Cardiac septum (tissue), 1 donor: ENCODE measurements at regions of chr1 and their contacts with region 1.

Region 1: DNA sequence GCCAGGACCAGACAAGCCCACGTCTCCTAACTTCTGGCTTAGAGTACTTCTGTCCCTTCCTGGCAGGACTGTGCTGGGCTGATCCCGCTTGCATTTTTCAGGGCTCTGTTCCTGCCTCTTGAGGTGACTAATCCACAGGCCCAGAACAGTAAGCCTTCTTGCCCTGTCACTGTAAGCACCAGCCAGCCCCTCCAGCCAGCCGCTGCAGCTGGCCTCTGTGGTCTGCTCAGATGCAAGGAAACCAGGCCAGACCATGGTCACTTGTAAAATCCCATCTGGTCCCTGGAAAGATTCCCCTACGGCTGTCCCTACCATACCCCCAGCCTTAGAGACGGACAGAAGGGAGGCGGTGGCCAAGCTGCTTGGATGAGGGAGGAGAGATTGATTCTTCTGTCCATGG is 74.2 kb downstream of the KIRREL1 start:
- DNase-seq: no peak

Region 2: GRCh38 chr1:157715736-157716135 is 351.9 kb before region 1 on chr1:
- intact Hi-C with region 1: no loop called
- DNase-seq: no peak

Region 3: DNA sequence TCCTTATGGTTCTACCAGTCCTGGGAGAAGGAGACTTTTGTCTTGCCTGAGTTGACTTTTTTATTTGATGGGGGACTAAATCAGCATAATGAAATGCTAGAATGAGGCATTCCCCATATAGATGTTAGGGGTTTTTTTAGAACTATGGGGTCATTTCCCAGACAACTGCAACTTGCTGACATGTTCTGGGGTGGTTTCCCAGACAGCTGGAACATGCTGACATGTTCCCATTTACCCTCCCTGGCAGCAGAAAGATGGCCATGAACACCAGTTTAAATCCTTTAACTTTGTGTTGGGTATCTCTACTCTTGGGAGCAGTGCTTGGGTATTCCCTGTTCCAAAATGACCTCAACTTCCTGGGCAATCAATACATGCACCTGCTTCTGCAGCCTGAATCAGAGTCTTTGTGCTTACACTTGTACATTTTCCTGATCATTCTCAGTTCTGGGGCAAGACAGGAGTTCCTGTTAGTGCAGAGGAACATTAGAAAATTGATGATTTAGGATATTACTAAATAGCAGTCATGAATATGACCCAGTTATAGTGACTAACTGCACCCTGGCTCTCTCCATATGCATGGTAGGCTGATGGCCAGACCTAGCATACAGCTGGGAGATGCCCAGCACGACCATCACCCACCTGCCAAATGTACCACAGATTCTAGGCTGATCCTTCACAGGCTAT is 150.6 kb before region 1 on chr1:
- intact Hi-C with region 1: no loop called
- DNase-seq: no peak

Region 4: GRCh38 chr1:158045639-158046038 is 22.0 kb before region 1 on chr1:
- intact Hi-C with region 1: loop called (anchors 2 kb)
- DNase-seq: no peak